CD8-positive, alpha-beta T cell (primary cell): ENCODE measurements at regions of chr19 and their contacts with region 1.

Region 1: DNA sequence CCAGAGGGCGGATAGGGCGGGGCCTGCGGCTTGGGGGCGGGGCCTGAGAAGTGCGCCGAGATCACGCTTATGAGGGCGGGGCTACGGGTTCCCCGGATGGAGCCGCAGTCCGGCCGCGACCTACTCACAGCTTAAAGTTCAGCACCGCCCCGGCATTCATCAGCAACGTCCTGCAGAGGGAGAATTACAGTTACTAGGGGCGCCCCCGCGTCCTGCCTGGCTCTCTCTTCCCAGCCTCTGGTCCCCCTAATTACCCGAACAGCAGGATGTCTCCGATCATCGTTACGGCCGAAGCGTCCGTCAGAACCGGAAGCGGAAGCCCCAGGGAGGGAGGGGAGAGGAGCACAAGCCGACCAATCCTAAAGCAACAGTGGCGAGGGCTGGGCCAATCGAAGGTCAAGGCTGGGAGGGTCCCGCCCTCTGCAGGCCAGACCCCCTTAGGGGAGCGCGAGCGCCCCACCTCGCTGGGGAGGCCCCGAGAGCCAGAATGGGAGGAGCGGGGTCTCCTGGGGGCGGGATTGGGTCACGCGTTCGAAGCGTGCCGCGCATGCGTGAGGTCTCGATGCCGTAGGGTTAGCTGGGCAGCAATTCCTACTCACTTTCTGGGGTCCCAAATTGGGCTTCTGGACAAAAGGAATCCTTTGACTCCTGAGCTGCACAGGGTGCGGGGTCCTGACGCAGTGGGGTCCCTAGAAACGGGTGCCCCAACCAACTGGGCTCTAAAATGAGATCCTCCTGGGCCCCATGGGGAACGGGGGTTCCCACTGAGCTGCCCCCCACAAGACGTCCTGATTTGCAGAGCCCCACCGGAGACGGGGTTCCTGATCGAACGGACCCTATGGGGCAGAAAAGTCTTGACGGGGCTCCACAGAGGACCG is at the start of gene SMIM7:
- DNase-seq: peak; percentile 97 to 100 (median 99)
- ATAC-seq: peak; percentile 96
- H3K4me3 ChIP-seq: peak within 1 kb of the TSS; percentile 83 to 95
- H3K4me3 Mint-ChIP-seq: peak within 1 kb of the TSS; percentile 100
- H3K27ac ChIP-seq: peak within 1 kb of the TSS; percentile 89 to 90
- H3K27ac Mint-ChIP-seq: peak within 1 kb of the TSS; percentile 99
- H3K4me1 ChIP-seq: peaks cover 39% of the 10 kb centered on the region
- H3K4me1 Mint-ChIP-seq: peaks cover 45% of the 10 kb centered on the region
- H3K27me3 ChIP-seq: no peaks in the 10 kb centered on the region
- H3K27me3 Mint-ChIP-seq: no peaks in the 10 kb centered on the region
- CTCF ChIP-seq: no peak
- total RNA-seq, gene SMIM7: 47.6 to 48.2 TPM

Region 2: DNA sequence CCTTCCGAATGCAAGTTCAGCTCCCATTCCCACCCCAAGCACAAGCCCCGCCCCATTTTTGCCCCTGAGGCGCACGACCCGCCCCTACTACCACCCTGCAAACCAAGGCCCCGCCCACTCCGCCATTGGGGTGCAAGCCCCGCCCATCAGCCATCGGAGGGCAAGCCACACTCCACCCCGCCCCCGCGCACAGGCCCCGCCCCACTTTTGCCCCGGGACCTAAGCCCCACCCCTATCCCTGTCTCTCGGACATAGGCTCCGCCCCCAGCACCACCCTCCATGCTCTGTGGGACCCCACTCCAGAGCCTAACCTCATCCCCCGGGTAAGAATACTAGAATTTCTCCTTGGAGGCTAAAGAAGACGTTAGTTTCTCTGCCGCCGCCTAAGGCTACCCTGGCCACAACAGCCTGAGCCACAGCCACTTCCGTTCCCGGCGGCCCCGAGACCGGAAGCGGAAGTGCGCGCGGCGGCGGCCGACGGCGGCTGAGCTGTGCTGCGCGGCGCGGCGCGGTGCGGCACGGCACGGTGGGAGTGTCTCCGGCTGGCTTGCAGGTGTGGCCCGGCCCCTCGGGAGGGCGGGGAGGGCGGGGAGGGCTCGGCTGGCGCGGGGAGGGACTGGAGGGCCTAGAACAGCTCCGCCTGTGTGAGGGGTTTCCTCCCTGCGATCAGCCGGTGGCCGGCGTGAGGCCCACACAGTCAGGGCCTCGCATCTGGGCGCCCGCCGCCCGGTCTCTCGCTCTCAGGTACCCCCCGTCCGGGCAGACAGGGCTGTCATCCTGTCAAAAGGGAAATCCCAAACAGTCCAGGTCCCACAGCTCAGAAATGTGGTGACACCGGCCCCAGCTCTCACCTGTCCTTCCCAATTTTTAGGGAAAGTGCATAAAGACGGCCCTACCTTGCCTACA is 1970.2 kb before region 1 on chr19 and contains the start of gene ZNF333:
- CTCF ChIA-PET with region 1: no interaction called
- POLR2A ChIA-PET with region 1: no interaction called
- intact Hi-C with region 1: loop called in 1 of 2 experiments (anchors 5 kb)
- DNase-seq: peak; percentile 96 to 99 (median 98)
- ATAC-seq: peak; percentile 88
- H3K4me3 ChIP-seq: peak within 1 kb of the TSS; percentile 73 to 82
- H3K4me3 Mint-ChIP-seq: peak within 1 kb of the TSS; percentile 94
- H3K27ac ChIP-seq: peak within 1 kb of the TSS; percentile 88 to 99
- H3K27ac Mint-ChIP-seq: peak within 1 kb of the TSS; percentile 99
- H3K4me1 ChIP-seq: no peaks in the 10 kb centered on the region
- H3K4me1 Mint-ChIP-seq: peaks cover 24% of the 10 kb centered on the region
- H3K27me3 ChIP-seq: no peaks in the 10 kb centered on the region
- H3K27me3 Mint-ChIP-seq: no peaks in the 10 kb centered on the region
- CTCF ChIP-seq: no peak
- total RNA-seq, gene ZNF333: 16.4 to 17.1 TPM

Region 3: GRCh38 chr19:16470911-16471811 is 188.9 kb before region 1 on chr19:
- CTCF ChIA-PET with region 1: no interaction called
- POLR2A ChIA-PET with region 1: no interaction called
- intact Hi-C with region 1: loop called (anchors 1 to 2 kb)
- DNase-seq: peak in 4 of 9 experiments; percentile 20 to 54 (median 39)
- ATAC-seq: peak; percentile 9
- H3K4me3 ChIP-seq: peak overlapping the region; percentile 50 to 69
- H3K4me3 Mint-ChIP-seq: peak overlapping the region; percentile 88
- H3K27ac ChIP-seq: peak overlapping the region in 1 of 2 experiments; percentile 33
- H3K27ac Mint-ChIP-seq: peak overlapping the region; percentile 57
- H3K4me1 ChIP-seq: peaks cover 21% of the 10 kb centered on the region
- H3K4me1 Mint-ChIP-seq: peaks cover 38% of the 10 kb centered on the region
- H3K27me3 ChIP-seq: no peaks in the 10 kb centered on the region
- H3K27me3 Mint-ChIP-seq: peaks cover 2% of the 10 kb centered on the region
- CTCF ChIP-seq: no peak

Region 4: GRCh38 chr19:16542045-16542909 is 117.8 kb before region 1 on chr19 and contains the start of gene CHERP:
- CTCF ChIA-PET with region 1: no interaction called
- POLR2A ChIA-PET with region 1: interaction called, 3 read pairs
- intact Hi-C with region 1: loop called (anchors 1 kb)
- DNase-seq: peak; percentile 89 to 98 (median 96)
- ATAC-seq: peak; percentile 88
- H3K4me3 ChIP-seq: peak within 1 kb of the TSS; percentile 63 to 79
- H3K4me3 Mint-ChIP-seq: peak within 1 kb of the TSS; percentile 84
- H3K27ac ChIP-seq: peak within 1 kb of the TSS; percentile 69 to 81
- H3K27ac Mint-ChIP-seq: peak within 1 kb of the TSS; percentile 90
- H3K4me1 ChIP-seq: peaks cover 56% of the 10 kb centered on the region
- H3K4me1 Mint-ChIP-seq: peaks cover 55% of the 10 kb centered on the region
- H3K27me3 ChIP-seq: no peaks in the 10 kb centered on the region
- H3K27me3 Mint-ChIP-seq: no peaks in the 10 kb centered on the region
- CTCF ChIP-seq: no peak
- total RNA-seq, gene CHERP: 68.7 to 68.9 TPM

Region 5: DNA sequence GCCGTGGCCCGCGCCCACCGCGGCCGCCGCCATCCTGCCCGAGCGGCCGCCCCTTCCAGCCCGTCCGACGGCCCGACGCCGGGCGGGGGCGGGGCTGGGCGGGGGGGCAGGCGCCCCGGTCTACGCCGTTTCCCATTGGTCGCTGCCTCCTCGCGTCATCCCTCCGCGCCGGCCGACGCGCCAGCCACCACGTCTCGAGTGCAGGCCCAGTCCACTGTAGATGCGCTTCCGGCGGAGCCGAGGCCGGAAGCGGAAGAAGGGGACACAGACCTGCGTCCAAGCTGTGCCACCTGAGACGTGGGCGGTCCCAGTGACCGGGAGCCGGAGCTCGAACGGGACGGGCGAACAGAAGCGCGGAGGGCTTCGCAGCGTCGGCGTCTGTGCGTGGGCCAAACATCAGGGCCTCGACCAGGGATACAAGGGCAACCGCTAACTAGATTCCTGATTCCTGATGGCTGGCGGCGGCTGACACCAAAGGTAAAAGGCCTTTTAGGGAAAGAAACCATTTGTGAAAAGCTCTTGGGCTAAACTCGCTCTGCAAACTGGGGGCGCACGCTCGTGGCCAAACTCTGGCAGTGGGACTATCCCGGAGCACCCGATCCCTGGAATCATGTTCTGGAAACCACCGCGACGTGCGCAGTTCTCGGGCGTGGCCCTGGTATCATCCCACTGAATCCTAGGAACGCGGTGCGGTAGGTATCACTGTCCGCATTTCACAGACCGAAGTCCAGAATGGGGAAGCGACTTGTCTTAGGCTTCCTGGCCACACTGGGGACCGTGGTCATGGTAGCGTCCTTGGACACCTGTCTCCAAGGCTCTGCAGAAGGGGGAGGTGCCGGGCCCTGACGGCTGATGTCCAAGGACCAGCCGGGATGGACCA is 87.5 kb before region 1 on chr19 and contains the start of gene SLC35E1:
- CTCF ChIA-PET with region 1: no interaction called
- POLR2A ChIA-PET with region 1: no interaction called
- intact Hi-C with region 1: loop called in 1 of 2 experiments (anchors 1 kb)
- DNase-seq: peak; percentile 80 to 96 (median 89)
- ATAC-seq: peak; percentile 91
- H3K4me3 ChIP-seq: peak within 1 kb of the TSS; percentile 80 to 99
- H3K4me3 Mint-ChIP-seq: peak within 1 kb of the TSS; percentile 95
- H3K27ac ChIP-seq: peak within 1 kb of the TSS; percentile 92 to 99
- H3K27ac Mint-ChIP-seq: peak within 1 kb of the TSS; percentile 99
- H3K4me1 ChIP-seq: peaks cover 34% of the 10 kb centered on the region
- H3K4me1 Mint-ChIP-seq: peaks cover 50% of the 10 kb centered on the region
- H3K27me3 ChIP-seq: no peaks in the 10 kb centered on the region
- H3K27me3 Mint-ChIP-seq: no peaks in the 10 kb centered on the region
- CTCF ChIP-seq: no peak
- total RNA-seq, gene SLC35E1: 92.3 to 95.4 TPM

Region 6: GRCh38 chr19:16628183-16628983 is 31.7 kb before region 1 on chr19 and contains the start of gene MED26:
- CTCF ChIA-PET with region 1: no interaction called
- POLR2A ChIA-PET with region 1: interaction called, 9 read pairs
- intact Hi-C with region 1: loop called (anchors 1 kb)
- DNase-seq: peak; percentile 91 to 99 (median 95)
- ATAC-seq: peak; percentile 89
- H3K4me3 ChIP-seq: peak within 1 kb of the TSS; percentile 89 to 100
- H3K4me3 Mint-ChIP-seq: peak within 1 kb of the TSS; percentile 99
- H3K27ac ChIP-seq: peak within 1 kb of the TSS; percentile 93 to 97
- H3K27ac Mint-ChIP-seq: peak within 1 kb of the TSS; percentile 98
- H3K4me1 ChIP-seq: peaks cover 17% of the 10 kb centered on the region
- H3K4me1 Mint-ChIP-seq: peaks cover 47% of the 10 kb centered on the region
- H3K27me3 ChIP-seq: no peaks in the 10 kb centered on the region
- H3K27me3 Mint-ChIP-seq: no peaks in the 10 kb centered on the region
- CTCF ChIP-seq: no peak
- total RNA-seq, gene MED26: 65.6 to 68.0 TPM

Region 7: GRCh38 chr19:16751733-16752132 is 91.7 kb after region 1 on chr19:
- CTCF ChIA-PET with region 1: no interaction called
- POLR2A ChIA-PET with region 1: no interaction called
- intact Hi-C with region 1: no loop called
- DNase-seq: no peak
- ATAC-seq: no peak
- H3K4me3 ChIP-seq: no peak overlapping the region
- H3K4me3 Mint-ChIP-seq: no peak overlapping the region
- H3K27ac ChIP-seq: no peak overlapping the region
- H3K27ac Mint-ChIP-seq: no peak overlapping the region
- H3K4me1 ChIP-seq: no peaks in the 10 kb centered on the region
- H3K4me1 Mint-ChIP-seq: peaks cover 2% of the 10 kb centered on the region
- H3K27me3 ChIP-seq: no peaks in the 10 kb centered on the region
- H3K27me3 Mint-ChIP-seq: peaks cover 13% of the 10 kb centered on the region
- CTCF ChIP-seq: no peak

Region 8: DNA sequence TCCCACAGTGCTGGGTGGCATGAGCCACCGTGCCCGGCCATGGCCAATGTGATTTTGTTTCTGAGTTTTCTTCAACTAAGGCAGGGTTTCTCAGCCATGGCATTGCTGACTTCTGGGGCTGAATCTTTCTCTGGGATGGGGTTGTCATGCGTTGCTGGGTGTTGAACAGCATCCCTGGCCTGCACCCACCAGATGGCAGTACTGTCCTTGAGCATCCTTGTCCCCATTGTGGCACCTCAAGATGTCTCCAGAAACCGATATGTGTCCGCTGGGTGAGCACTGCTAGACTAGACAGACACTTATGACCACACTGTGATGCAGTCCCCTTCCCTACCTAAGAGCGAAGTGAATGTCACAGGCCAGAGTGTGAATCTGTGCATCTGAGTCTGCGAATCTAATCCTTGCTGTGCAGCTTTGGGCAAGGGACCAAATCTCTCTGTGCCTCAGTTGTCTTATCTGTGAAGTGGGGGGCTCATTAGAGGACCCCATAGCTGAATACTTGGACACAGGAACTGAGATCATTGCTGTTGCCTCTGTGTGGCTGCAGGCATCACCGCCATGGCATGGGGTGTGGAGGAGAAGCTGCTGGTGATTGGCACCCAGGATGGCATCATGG is 118.8 kb after region 1 on chr19:
- CTCF ChIA-PET with region 1: no interaction called
- POLR2A ChIA-PET with region 1: no interaction called
- intact Hi-C with region 1: no loop called
- DNase-seq: peak; percentile 7 to 68 (median 38)
- ATAC-seq: peak; percentile 49
- H3K4me3 ChIP-seq: no peak overlapping the region
- H3K4me3 Mint-ChIP-seq: no peak overlapping the region
- H3K27ac ChIP-seq: no peak overlapping the region
- H3K27ac Mint-ChIP-seq: no peak overlapping the region
- H3K4me1 ChIP-seq: no peaks in the 10 kb centered on the region
- H3K4me1 Mint-ChIP-seq: no peaks in the 10 kb centered on the region
- H3K27me3 ChIP-seq: peaks cover 0 to 12% of the 10 kb centered on the region in 2 experiments
- H3K27me3 Mint-ChIP-seq: peaks cover 15% of the 10 kb centered on the region
- CTCF ChIP-seq: no peak